Mammary epithelial cell (primary cell): ENCODE measurements at regions of chr19 and their contacts with region 1.

Region 1: GRCh38 chr19:32971715-32972540 is at the starts of genes CEP89 and FAAP24:
- DNase-seq: peak; percentile 99
- H3K4me3 ChIP-seq: peak within 1 kb of the TSS; percentile 60 to 92 (median 83)
- H3K27ac ChIP-seq: peak within 1 kb of the TSS; percentile 81
- H3K4me1 ChIP-seq: peaks cover 2% of the 10 kb centered on the region
- H3K27me3 ChIP-seq: no peaks in the 10 kb centered on the region
- CTCF ChIP-seq: no peak
- total RNA-seq, gene CEP89: 17.0 to 25.7 TPM
- total RNA-seq, gene FAAP24: 4.3 to 6.4 TPM

Region 2: DNA sequence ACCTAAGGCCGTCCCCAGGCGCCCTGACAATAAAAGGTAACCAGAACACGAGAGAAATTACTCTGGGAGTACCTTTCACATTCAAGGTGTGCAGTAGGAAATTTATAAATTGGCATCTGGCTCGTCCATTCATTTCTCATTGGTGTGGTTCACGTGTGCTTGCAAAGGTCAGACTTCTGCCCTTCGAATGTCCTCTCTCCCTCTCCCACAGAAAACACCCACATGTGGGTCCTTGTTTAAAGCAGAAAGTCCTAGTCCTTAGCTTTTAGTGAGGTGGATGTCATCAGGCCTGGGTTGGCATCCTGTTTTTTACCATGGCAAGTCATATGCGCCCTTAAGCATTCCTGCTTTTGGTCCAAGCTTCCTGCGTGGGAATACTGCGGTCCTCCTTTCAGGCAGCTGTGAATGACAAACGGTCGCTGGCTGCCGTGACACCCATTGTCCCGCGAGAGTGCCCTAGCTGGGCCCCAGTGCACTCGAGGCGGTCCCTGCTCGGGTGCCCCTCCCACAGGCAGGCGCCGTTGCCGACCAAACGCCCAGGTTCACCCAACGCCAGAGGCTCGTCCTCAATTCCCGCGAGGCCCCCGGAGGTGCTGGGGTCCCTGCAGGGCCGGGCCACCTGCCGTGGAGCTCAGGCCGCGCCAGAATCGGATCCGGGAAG is 280.5 kb before region 1 on chr19 and contains the start of gene NUDT19:
- CTCF ChIA-PET with region 1: no interaction called
- dilution Hi-C with region 1: no loop called
- in situ Hi-C with region 1: no loop called
- intact Hi-C with region 1: loop called (anchors 2 kb)
- DNase-seq: peak; percentile 80
- H3K4me3 ChIP-seq: peak within 1 kb of the TSS; percentile 65 to 85 (median 70)
- H3K27ac ChIP-seq: peak within 1 kb of the TSS; percentile 45
- H3K4me1 ChIP-seq: peaks cover 15% of the 10 kb centered on the region
- H3K27me3 ChIP-seq: no peaks in the 10 kb centered on the region
- CTCF ChIP-seq: no peak
- total RNA-seq, gene NUDT19: 16.8 to 21.2 TPM

Region 3: DNA sequence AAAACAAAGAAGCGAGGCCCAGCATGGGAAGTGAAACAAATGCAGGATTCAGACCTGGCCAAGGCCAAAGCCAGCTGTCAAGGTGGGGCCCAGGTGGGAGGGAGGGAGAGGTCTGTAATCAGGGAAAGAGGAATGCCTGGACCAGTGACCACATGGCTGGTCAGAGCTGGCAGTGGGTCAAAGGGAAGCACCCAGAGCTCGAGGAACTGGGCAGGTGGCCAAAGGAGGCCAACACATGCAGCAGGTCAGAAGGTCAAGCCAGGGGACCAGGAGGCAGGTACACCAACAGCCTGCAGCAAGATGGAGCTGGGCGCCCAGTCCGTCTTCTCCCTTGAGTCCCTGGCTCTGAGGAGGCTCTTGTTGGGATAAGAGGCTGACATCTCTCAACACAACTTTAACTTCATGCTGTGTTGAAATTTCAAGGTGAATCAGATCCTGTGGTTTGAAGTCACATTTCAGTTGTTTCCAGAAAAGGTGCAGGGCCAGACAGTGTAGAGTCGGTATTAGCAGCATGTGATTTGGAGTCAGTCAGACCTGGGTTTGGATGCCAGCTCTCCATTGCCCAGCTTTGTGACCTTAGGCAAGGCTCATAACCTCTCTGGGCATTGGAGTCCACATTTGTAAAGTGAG is 126.2 kb after region 1 on chr19:
- CTCF ChIA-PET with region 1: no interaction called
- dilution Hi-C with region 1: no loop called
- in situ Hi-C with region 1: loop called in 1 of 2 experiments (anchors 10 kb)
- intact Hi-C with region 1: no loop called
- DNase-seq: peak; percentile 84
- H3K4me3 ChIP-seq: no peak overlapping the region
- H3K27ac ChIP-seq: no peak overlapping the region
- H3K4me1 ChIP-seq: peaks cover 25% of the 10 kb centered on the region
- H3K27me3 ChIP-seq: no peaks in the 10 kb centered on the region
- CTCF ChIP-seq: no peak

Region 4: GRCh38 chr19:33118643-33119042 is 146.7 kb after region 1 on chr19:
- CTCF ChIA-PET with region 1: no interaction called
- dilution Hi-C with region 1: no loop called
- in situ Hi-C with region 1: loop called in 1 of 2 experiments (anchors 5 kb)
- intact Hi-C with region 1: loop called (anchors 1 kb)
- DNase-seq: no peak
- H3K4me3 ChIP-seq: no peak overlapping the region
- H3K27ac ChIP-seq: no peak overlapping the region
- H3K4me1 ChIP-seq: no peaks in the 10 kb centered on the region
- H3K27me3 ChIP-seq: no peaks in the 10 kb centered on the region
- CTCF ChIP-seq: no peak

Region 5: GRCh38 chr19:33176670-33177416 is 204.9 kb after region 1 on chr19:
- CTCF ChIA-PET with region 1: no interaction called
- dilution Hi-C with region 1: loop called (anchors 5 kb)
- in situ Hi-C with region 1: no loop called
- intact Hi-C with region 1: loop called (anchors 2 kb)
- DNase-seq: peak; percentile 98
- H3K4me3 ChIP-seq: peak overlapping the region; percentile 56 to 80 (median 68)
- H3K27ac ChIP-seq: peak overlapping the region; percentile 74
- H3K4me1 ChIP-seq: peaks cover 18% of the 10 kb centered on the region
- H3K27me3 ChIP-seq: no peaks in the 10 kb centered on the region
- CTCF ChIP-seq: peak in 1 of 2 donors; percentile 20